H1 (cell line): ENCODE measurements at regions of chr17 and their contacts with region 1.

Region 1: GRCh38 chr17:32486111-32486700 is 587 bp upstream of the CDK5R1 start:
- DNase-seq: peak in 1 of 2 experiments; percentile 81
- H3K4me3 ChIP-seq: peak overlapping the region; percentile 28 to 69 (median 41)
- H3K27ac ChIP-seq: peak overlapping the region; percentile 27; the same call in 1 of the 2 replicates
- H3K4me1 ChIP-seq: peaks cover 10 to 43% (median 22%) of the 10 kb centered on the region in 4 experiments
- H3K27me3 ChIP-seq: no peaks in the 10 kb centered on the region; a peak in 2 of 7 replicates
- CTCF ChIP-seq: no peak
- EP300 ChIP-seq: no peak
- POLR2A ChIP-seq: peak in 1 of 2 experiments; percentile 64; a peak in 2 of 3 replicates
- RAD21 ChIP-seq: no peak; a peak in 1 of 4 replicates

Region 2: GRCh38 chr17:32283745-32284201 is 202.4 kb before region 1 on chr17:
- CTCF ChIA-PET with region 1: no interaction called
- POLR2A ChIA-PET with region 1: no interaction called
- DNase-seq: no peak
- H3K4me3 ChIP-seq: no peak overlapping the region
- H3K27ac ChIP-seq: no peak overlapping the region
- H3K4me1 ChIP-seq: peaks cover 8 to 42% (median 34%) of the 10 kb centered on the region in 4 experiments
- H3K27me3 ChIP-seq: no peaks in the 10 kb centered on the region; a peak in 1 of 7 replicates
- CTCF ChIP-seq: no peak
- EP300 ChIP-seq: no peak
- POLR2A ChIP-seq: no peak
- RAD21 ChIP-seq: no peak

Region 3: GRCh38 chr17:32396343-32396742 is 89.9 kb before region 1 on chr17:
- CTCF ChIA-PET with region 1: no interaction called
- POLR2A ChIA-PET with region 1: no interaction called
- DNase-seq: no peak
- H3K4me3 ChIP-seq: no peak overlapping the region
- H3K27ac ChIP-seq: no peak overlapping the region
- H3K4me1 ChIP-seq: no peaks in the 10 kb centered on the region
- H3K27me3 ChIP-seq: no peaks in the 10 kb centered on the region
- CTCF ChIP-seq: no peak
- EP300 ChIP-seq: no peak
- POLR2A ChIP-seq: no peak
- RAD21 ChIP-seq: no peak

Region 4: DNA sequence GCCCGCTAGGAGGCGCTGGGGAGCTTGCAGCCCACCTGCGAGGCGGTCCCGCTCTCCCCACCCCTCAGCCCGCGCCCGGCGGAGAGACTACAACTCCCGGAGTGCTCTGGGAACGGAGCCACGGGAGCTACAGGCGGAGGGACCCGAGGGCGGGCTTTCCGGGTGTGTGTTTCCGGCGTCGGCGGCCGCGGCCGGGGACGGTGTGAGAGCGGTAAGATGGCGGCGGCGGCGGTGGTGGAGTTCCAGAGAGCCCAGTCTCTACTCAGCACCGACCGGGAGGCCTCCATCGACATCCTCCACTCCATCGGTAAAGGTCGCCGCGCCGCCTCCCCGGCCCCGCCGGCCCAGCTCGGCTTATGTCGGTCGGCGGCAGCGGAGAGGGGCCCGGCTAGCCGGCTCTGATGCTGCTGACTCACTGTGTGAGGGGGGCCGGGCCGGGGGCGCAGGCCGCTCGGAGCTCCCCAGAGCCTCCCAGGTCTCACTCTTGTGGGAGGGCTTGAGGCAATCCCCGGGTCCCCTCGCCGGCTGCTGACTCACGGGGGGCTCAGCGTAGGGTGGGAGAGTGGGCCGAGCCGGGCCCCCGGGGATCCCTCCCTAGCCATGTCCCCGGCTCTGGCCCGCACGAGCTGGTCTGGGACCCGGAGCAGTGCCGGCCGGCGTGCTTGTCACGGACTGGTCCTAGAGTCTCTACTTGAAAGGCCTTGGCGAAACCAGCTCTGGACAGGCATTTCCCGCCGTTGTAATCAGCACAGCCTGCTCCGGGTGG is 41.7 kb before region 1 on chr17 and contains the start of gene PSMD11:
- CTCF ChIA-PET with region 1: interaction called, 4 read pairs
- POLR2A ChIA-PET with region 1: interaction called, 15 read pairs
- DNase-seq: peak; percentile 94 to 99
- H3K4me3 ChIP-seq: peak within 1 kb of the TSS; percentile 93 to 98 (median 96)
- H3K27ac ChIP-seq: peak within 1 kb of the TSS; percentile 90
- H3K4me1 ChIP-seq: peaks cover 0 to 4% (median 1%) of the 10 kb centered on the region in 4 experiments; a peak in 2 of 7 replicates
- H3K27me3 ChIP-seq: peaks cover 0 to 2% (median 0%) of the 10 kb centered on the region in 4 experiments; a peak in 1 of 7 replicates
- CTCF ChIP-seq: peak in 2 of 3 experiments; percentile 83 to 92; a peak in 3 of 4 replicates
- EP300 ChIP-seq: peak in 1 of 2 experiments; percentile 4; a peak in 1 of 3 replicates
- POLR2A ChIP-seq: peak; percentile 70 to 71; a peak in 2 of 3 replicates
- RAD21 ChIP-seq: peak in 1 of 2 experiments; percentile 40; a peak in 3 of 4 replicates
- total RNA-seq, gene PSMD11: 171 and 175 TPM in 2 replicates

Region 5: DNA sequence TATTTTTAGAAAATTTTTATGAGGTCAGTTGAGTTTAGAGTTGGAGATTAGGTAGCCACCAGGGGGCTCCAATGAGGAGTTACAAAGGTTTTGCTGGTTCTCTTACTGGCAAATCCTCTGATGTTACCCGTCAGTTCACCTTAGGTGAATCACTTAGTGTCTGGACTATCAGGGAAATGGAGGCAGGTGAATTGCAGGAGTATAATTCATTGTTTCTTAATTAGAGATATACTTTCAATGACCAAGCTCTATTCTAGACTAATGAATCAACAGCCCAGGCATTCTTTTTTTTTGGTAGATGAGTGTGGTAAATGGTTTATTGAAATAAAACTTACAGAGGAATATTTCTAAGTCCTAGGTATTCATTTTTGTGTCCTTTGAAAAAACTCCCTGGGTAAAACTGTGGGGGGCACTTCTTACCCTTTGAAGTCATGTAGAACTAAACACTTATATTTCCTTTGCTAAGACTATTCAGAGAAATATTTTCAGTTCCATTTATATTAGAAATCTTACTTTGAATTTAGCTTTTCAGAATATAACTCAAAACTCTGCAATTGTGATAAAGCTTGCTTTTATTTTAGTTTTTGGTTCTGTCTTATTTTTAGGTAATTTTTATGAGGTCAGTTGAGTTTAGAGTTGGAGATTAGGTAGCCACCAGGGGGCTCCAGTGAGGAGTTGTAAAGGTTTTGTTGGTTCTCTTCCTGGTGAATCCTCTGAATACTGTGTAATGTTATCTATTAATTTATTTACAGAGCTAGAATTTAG is 24.2 kb before region 1 on chr17:
- CTCF ChIA-PET with region 1: interaction called, 71 read pairs
- POLR2A ChIA-PET with region 1: interaction called, 3 read pairs
- DNase-seq: peak in 1 of 2 experiments; percentile 78
- H3K4me3 ChIP-seq: no peak overlapping the region
- H3K27ac ChIP-seq: no peak overlapping the region
- H3K4me1 ChIP-seq: no peaks in the 10 kb centered on the region
- H3K27me3 ChIP-seq: no peaks in the 10 kb centered on the region
- CTCF ChIP-seq: peak in 2 of 3 experiments; percentile 51 to 59; a peak in 2 of 4 replicates
- EP300 ChIP-seq: no peak
- POLR2A ChIP-seq: no peak
- RAD21 ChIP-seq: peak in 1 of 2 experiments; percentile 20; a peak in 1 of 4 replicates

Region 6: GRCh38 chr17:32470405-32471167 is 15.6 kb before region 1 on chr17:
- CTCF ChIA-PET with region 1: interaction called, 33 read pairs
- POLR2A ChIA-PET with region 1: interaction called, 11 read pairs
- DNase-seq: no peak
- H3K4me3 ChIP-seq: no peak overlapping the region
- H3K27ac ChIP-seq: no peak overlapping the region
- H3K4me1 ChIP-seq: no peaks in the 10 kb centered on the region
- H3K27me3 ChIP-seq: no peaks in the 10 kb centered on the region
- CTCF ChIP-seq: no peak
- EP300 ChIP-seq: no peak
- POLR2A ChIP-seq: no peak
- RAD21 ChIP-seq: no peak

Region 7: DNA sequence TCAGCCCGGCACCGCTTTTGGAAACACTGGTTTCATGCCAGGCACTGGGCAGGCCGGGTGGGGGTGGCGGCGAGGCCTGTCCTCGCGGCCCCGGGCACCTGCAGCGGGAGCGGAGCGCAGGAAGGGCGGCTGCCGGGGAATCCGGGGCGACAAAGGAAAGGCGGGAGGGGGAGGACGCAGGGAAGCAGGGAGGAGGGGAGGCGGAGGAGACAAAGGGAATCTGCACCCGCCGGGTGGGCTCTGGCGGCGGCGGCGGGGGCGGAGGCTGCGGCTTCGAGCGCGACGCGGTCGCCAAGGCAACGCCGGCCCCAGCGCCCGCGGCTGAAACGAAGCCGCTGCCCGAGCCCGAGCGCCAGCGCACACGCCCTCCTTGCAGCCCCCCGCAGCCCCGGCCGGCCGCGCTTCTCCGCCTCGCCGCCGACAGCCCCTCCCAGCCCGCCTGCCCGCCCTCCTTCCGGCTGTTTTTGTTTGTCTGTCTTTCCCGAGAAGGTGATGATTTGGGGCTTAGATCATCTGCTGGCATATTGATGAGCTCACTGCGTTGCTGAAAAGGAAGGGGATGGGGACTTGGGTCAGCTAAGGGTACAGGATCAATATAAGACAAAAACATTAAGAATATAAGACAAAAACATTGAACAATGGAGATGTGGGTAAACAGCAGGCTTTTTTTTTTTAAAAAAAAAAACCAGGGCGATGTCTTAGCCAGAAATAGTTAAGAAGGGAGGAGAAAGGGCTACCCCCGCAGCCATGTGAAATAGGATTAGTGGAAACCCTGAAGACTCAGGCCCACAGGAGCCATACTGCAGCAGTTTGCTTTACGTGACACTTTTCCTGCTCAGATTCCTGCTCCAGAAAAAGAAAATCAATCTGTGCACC is 33.3 kb after region 1 on chr17:
- CTCF ChIA-PET with region 1: interaction called, 7 read pairs
- POLR2A ChIA-PET with region 1: interaction called, 35 read pairs
- DNase-seq: peak; percentile 60 to 84
- H3K4me3 ChIP-seq: peak overlapping the region; percentile 37 to 65 (median 55)
- H3K27ac ChIP-seq: peak overlapping the region; percentile 57; the same call in 1 of the 2 replicates
- H3K4me1 ChIP-seq: peaks cover 21 to 46% (median 27%) of the 10 kb centered on the region in 4 experiments
- H3K27me3 ChIP-seq: no peaks in the 10 kb centered on the region; a peak in 2 of 7 replicates
- CTCF ChIP-seq: no peak
- EP300 ChIP-seq: peak in 1 of 2 experiments; percentile 61; a peak in 1 of 3 replicates
- POLR2A ChIP-seq: peak in 1 of 2 experiments; percentile 47; a peak in 1 of 3 replicates
- RAD21 ChIP-seq: no peak

Region 8: DNA sequence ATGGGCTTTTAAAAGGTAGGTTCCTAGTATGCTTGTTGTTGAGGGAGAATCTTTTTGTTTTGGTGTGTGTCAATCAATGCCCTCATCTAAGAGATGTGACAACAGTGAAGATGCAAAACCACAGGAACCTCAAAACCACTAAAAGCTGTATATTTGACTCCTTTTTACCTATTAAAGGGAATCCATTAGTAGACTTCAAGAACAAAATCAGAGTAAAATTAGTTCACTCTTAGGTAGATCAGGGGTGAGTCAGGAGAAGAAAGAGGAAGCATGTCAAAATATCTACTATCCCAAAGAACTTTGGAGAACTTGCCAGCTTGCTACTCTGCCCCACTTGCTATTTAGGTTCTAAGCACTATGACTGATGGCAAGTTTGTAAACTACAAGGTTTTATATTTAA is 89.7 kb after region 1 on chr17:
- CTCF ChIA-PET with region 1: no interaction called
- POLR2A ChIA-PET with region 1: no interaction called
- DNase-seq: no peak
- H3K4me3 ChIP-seq: no peak overlapping the region
- H3K27ac ChIP-seq: no peak overlapping the region
- H3K4me1 ChIP-seq: no peaks in the 10 kb centered on the region
- H3K27me3 ChIP-seq: no peaks in the 10 kb centered on the region
- CTCF ChIP-seq: no peak
- EP300 ChIP-seq: no peak
- POLR2A ChIP-seq: no peak
- RAD21 ChIP-seq: no peak

Region 9: GRCh38 chr17:32588982-32589381 is 102.8 kb after region 1 on chr17:
- CTCF ChIA-PET with region 1: interaction called, 16 read pairs
- POLR2A ChIA-PET with region 1: no interaction called
- DNase-seq: no peak
- H3K4me3 ChIP-seq: no peak overlapping the region
- H3K27ac ChIP-seq: no peak overlapping the region
- H3K4me1 ChIP-seq: no peaks in the 10 kb centered on the region
- H3K27me3 ChIP-seq: no peaks in the 10 kb centered on the region
- CTCF ChIP-seq: peak; percentile 61 to 81 (median 79)
- EP300 ChIP-seq: no peak
- POLR2A ChIP-seq: no peak
- RAD21 ChIP-seq: peak; percentile 54 to 67

Region 10: DNA sequence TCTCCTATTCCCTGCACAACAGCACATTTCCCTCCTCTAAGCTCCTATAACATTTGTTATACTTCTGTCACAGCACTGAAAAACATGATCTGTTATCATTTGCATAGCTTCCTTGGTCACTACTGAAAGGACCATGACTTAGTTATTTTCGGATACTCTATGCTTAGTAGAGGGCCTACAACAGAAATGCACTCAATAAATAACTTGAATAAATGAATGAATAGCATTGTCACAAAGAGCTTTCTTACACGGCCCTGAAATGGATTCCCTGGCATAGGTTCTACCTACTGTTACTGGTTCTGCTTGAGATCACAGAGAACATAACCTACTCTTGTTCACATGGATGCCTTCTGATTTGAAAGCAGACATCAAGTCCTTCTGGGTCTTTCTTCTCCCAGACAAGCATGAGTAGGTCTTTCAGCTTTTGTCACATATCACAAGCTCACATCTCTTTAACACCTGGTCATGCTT is 349.1 kb after region 1 on chr17:
- CTCF ChIA-PET with region 1: no interaction called
- POLR2A ChIA-PET with region 1: no interaction called
- DNase-seq: no peak
- H3K4me3 ChIP-seq: no peak overlapping the region
- H3K27ac ChIP-seq: no peak overlapping the region
- H3K4me1 ChIP-seq: no peaks in the 10 kb centered on the region
- H3K27me3 ChIP-seq: no peaks in the 10 kb centered on the region
- CTCF ChIP-seq: no peak
- EP300 ChIP-seq: no peak
- POLR2A ChIP-seq: no peak
- RAD21 ChIP-seq: no peak